ENCODE measurements at regions of chr2 and their contacts with region 1.

Region 1: DNA sequence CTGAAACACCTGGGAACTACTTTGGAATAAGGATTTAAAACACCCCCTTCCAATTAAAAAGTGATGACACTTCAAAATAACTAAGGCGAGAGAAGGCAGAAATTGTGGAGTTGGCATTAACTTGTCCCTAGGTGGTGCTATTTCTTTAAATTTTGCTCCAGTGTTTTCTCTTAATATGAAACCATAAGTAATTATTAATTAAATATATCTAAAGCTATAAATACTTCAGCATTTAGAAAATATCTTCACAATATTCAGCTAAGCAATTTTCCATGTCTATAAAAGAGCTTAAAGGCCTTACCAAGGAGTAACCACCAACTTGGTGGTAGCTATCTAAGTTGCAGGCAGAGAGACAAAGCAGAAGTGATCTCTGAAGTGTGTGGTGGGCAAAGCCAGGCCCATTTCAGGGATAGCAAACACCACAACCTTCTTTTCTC is 186.8 kb upstream of the PGAP1 start:
- DNase-seq: peak in 2 of 5 donors; percentile 29 to 38
- H3K4me3 ChIP-seq: no peak overlapping the region
- H3K4me3 Mint-ChIP-seq: no peak overlapping the region
- H3K27ac ChIP-seq: no peak overlapping the region
- H3K27ac Mint-ChIP-seq: peak overlapping the region in 7 of 8 donors; percentile 14 to 82 (median 75)
- H3K4me1 ChIP-seq: peaks cover 19% of the 10 kb centered on the region
- H3K4me1 Mint-ChIP-seq: peaks cover 26 to 43% (median 39%) of the 10 kb centered on the region in 3 donors
- H3K27me3 ChIP-seq: no peaks in the 10 kb centered on the region
- H3K27me3 Mint-ChIP-seq: no peaks in the 10 kb centered on the region

Region 2: DNA sequence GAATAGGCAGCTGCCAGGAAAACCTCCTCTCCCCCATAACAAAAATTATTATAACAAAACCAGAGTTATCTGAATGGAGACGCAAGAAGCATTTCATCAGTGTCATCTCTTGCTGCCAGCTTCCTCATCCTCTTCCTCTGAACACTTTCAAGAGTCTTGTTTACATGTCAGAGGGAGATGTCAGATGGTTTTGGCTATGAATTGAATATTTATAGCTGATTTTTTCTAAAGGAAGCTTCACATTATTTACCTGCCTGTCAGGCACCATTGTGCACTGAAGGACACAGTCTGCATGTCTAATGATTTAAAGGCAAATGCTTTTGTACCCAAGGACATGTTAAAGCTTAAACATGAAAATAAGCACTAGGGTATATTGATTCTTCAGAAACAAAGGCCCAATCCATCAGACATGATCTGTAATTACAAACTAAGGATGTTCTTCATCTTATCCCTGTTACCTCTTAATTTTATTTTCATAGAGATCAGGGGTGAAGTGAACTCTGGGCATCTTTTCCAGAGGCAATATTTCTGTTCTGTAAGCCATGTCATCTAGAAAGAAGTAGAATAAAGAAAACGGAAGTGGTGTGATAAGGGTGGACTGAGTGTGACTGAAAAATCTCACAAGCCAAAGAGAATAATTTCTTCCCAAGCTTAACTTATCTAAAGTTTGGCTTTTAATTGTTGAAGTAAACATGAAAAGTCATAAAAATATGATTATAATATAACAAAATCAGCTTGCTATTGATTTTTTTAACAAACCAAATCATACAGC is 28.6 kb after region 1 on chr2:
- CTCF ChIA-PET with region 1: interaction called, 11 read pairs
- POLR2A ChIA-PET with region 1: no interaction called
- DNase-seq: no peak
- H3K4me3 ChIP-seq: no peak overlapping the region
- H3K4me3 Mint-ChIP-seq: peak overlapping the region in 6 of 7 donors; percentile 13 to 50 (median 20)
- H3K27ac ChIP-seq: no peak overlapping the region
- H3K27ac Mint-ChIP-seq: peak overlapping the region; percentile 16 to 89 (median 72)
- H3K4me1 ChIP-seq: peaks cover 82% of the 10 kb centered on the region
- H3K4me1 Mint-ChIP-seq: peaks cover 72 to 90% (median 85%) of the 10 kb centered on the region in 3 donors
- H3K27me3 ChIP-seq: no peaks in the 10 kb centered on the region
- H3K27me3 Mint-ChIP-seq: no peaks in the 10 kb centered on the region

Region 3: DNA sequence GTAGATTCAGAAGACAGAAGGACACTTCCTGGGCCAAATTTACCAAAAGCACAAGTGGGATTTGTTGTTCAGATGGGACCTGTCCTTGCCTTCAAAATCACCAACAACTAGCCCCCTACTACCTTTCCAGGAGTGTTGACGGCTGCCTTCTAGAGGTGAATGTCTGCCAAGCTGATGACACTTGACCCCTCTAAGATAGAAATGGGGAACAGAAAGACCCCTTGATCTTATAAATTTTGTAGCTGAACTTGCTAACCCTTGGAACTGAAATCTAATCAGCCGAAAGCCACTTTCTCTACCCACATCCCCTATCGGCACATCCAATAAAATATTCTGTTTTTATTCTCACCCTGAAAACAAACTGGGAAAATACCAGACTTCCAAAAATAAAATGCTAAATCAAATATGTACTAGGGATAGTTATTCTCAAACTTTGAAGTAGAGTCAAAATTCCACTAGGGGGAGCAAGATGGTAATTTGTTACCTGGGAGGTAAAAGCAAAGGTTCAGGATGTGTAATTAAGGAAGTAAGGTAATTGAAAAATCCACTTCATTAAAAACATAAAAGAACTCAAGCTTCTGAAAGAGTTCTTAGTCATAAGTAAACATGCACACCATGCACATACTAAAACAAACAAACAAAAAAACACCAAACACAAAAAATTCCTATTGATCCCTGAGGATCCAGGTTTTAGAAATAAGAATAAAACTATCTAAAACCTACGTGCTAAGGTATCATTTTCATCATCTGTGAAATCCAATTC is 78.1 kb after region 1 on chr2:
- CTCF ChIA-PET with region 1: interaction called, 24 read pairs
- POLR2A ChIA-PET with region 1: no interaction called
- DNase-seq: peak in 2 of 5 donors; percentile 64 to 69
- H3K4me3 ChIP-seq: peak overlapping the region; percentile 4
- H3K4me3 Mint-ChIP-seq: peak overlapping the region in 6 of 7 donors; percentile 41 to 78 (median 56)
- H3K27ac ChIP-seq: peak overlapping the region; percentile 45
- H3K27ac Mint-ChIP-seq: peak overlapping the region; percentile 72 to 99 (median 88)
- H3K4me1 ChIP-seq: peaks cover 87% of the 10 kb centered on the region
- H3K4me1 Mint-ChIP-seq: peaks cover 73 to 92% (median 91%) of the 10 kb centered on the region in 3 donors
- H3K27me3 ChIP-seq: no peaks in the 10 kb centered on the region
- H3K27me3 Mint-ChIP-seq: no peaks in the 10 kb centered on the region

Region 4: DNA sequence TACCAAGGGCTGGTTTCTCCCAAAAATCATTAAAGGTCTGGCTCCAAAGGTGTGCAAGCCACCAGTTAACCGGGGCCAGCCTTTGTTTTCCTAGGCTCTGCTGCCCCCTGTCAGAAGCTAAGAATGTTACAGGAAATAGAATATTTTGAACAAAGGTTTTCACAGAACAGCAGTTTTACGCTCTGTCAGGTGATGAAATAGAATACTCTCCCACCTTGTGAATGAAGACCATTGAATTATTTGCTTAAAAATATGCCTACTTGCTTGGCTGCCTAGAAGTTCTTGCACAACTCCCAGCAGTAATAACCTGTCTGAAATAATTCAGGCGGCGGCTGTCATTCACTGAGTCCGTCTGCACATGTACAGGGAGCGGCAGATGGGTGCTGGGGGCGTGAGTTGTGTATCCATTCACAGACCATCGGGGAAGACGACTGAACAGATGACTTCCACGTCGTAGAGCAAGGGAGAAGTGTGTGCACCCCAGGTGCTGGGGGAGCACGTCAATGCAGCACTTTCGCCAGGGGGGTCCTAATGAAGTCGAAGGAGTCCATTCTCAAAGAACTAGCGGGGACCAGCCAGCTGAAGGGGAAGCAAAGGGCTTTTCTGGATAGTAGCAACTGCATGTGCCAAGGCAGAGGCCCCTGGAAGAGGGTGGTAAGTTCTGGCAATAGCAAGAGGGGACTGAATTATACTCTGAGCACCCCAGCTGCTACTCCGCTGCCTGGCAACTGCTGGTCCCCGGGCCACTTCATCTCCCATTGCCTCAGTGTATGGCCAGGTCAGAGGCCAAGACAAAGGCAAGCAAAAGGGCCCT is 265.4 kb after region 1 on chr2:
- CTCF ChIA-PET with region 1: interaction called, 12 read pairs
- POLR2A ChIA-PET with region 1: no interaction called
- DNase-seq: peak; percentile 41 to 72 (median 54)
- H3K4me3 ChIP-seq: no peak overlapping the region
- H3K4me3 Mint-ChIP-seq: no peak overlapping the region
- H3K27ac ChIP-seq: no peak overlapping the region
- H3K27ac Mint-ChIP-seq: no peak overlapping the region
- H3K4me1 ChIP-seq: peaks cover 6% of the 10 kb centered on the region
- H3K4me1 Mint-ChIP-seq: peaks cover 3 to 18% (median 10%) of the 10 kb centered on the region in 3 donors
- H3K27me3 ChIP-seq: no peaks in the 10 kb centered on the region
- H3K27me3 Mint-ChIP-seq: peaks cover 3 to 6% of the 10 kb centered on the region in 2 donors

Measured in CD8-positive, alpha-beta memory T cell (primary cell).